Caco-2 (cell line): ENCODE measurements at regions of chr1 and their contacts with region 1.

Region 1: DNA sequence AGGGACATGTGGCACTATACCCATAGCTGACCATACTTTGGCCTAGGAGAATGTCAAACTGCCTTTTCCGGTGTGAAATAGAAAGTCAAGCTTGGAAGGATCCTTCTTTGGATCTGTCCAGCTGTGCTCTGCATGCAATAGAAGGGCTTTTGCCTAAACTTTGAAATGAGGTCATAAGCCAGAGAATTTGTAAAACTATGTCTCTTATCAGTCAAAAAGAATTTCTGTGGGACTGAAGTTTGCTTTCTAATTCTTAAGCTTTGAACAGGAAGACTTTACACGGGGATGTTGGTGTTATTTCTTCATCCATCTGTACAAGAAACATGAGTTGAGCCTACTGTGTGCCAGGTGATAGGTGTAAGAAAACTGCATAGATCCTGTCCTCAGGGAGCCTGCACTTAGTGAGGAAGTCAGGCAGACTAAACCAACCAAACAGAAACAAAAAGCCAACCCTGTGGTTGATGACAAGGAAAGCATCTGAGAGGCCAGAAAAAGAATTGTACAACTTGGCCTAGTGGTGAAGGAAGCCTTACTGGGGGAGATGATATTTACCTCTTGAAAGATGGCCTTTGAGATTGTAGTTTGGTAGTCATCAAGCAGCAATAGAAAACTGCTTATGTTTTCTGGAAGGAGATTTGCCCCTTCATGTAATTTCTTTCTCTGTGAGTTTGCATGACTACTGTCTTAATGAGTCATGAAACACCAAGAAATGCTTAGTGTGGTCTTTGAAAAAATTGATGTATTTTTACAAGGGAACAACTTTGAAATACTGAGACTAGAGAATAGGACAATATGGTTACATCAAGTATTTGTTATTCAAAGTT is 24.8 kb downstream of the TGFB2 start:
- DNase-seq: peak in 1 of 2 experiments; percentile 27
- H3K4me3 ChIP-seq: no peak overlapping the region
- H3K4me3 Mint-ChIP-seq: peak overlapping the region; percentile 37
- H3K27ac Mint-ChIP-seq: peak overlapping the region; percentile 88
- H3K4me1 ChIP-seq: peaks cover 85% of the 10 kb centered on the region
- H3K4me1 Mint-ChIP-seq: peaks cover 29% of the 10 kb centered on the region
- H3K27me3 ChIP-seq: no peaks in the 10 kb centered on the region
- H3K27me3 Mint-ChIP-seq: no peaks in the 10 kb centered on the region
- CTCF ChIP-seq: no peak

Region 2: DNA sequence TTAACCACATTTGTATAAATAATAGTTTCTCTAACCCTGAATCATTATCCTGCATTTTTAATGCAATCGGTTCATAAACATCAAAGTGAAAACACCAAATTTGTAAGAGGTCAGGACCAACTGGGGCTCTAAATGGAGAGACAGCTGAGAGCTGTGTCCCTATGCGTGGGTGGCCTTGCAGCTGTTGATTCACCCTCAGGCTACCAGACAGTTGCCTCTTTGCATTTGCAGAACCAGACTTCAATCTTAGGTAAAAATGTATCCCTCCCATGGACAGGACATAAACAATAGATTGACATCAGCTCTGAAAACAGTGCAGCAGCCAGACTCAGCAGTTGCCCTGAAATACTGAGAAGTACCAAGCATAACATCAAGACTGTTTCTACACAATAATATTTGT is 33.6 kb before region 1 on chr1:
- CTCF ChIA-PET with region 1: no interaction called
- POLR2A ChIA-PET with region 1: no interaction called
- intact Hi-C with region 1: no loop called
- DNase-seq: no peak
- H3K4me3 ChIP-seq: no peak overlapping the region
- H3K4me3 Mint-ChIP-seq: no peak overlapping the region
- H3K27ac Mint-ChIP-seq: no peak overlapping the region
- H3K4me1 ChIP-seq: peaks cover 6% of the 10 kb centered on the region
- H3K4me1 Mint-ChIP-seq: no peaks in the 10 kb centered on the region
- H3K27me3 ChIP-seq: no peaks in the 10 kb centered on the region
- H3K27me3 Mint-ChIP-seq: no peaks in the 10 kb centered on the region
- CTCF ChIP-seq: no peak

Region 3: GRCh38 chr1:218380151-218380977 is 10.5 kb after region 1 on chr1:
- CTCF ChIA-PET with region 1: interaction called, 5 read pairs
- POLR2A ChIA-PET with region 1: interaction called, 9 read pairs
- intact Hi-C with region 1: loop called (anchors 1 kb)
- DNase-seq: peak; percentile 79 to 82
- H3K4me3 ChIP-seq: no peak overlapping the region
- H3K4me3 Mint-ChIP-seq: peak overlapping the region; percentile 20
- H3K27ac Mint-ChIP-seq: peak overlapping the region; percentile 89
- H3K4me1 ChIP-seq: peaks cover 49% of the 10 kb centered on the region
- H3K4me1 Mint-ChIP-seq: peaks cover 30% of the 10 kb centered on the region
- H3K27me3 ChIP-seq: no peaks in the 10 kb centered on the region
- H3K27me3 Mint-ChIP-seq: no peaks in the 10 kb centered on the region
- CTCF ChIP-seq: no peak

Region 4: GRCh38 chr1:218401998-218402785 is 32.3 kb after region 1 on chr1:
- CTCF ChIA-PET with region 1: interaction called, 3 read pairs
- POLR2A ChIA-PET with region 1: no interaction called
- intact Hi-C with region 1: loop called (anchors 1 kb)
- DNase-seq: peak; percentile 42 to 46
- H3K4me3 ChIP-seq: no peak overlapping the region
- H3K4me3 Mint-ChIP-seq: no peak overlapping the region
- H3K27ac Mint-ChIP-seq: peak overlapping the region; percentile 16
- H3K4me1 ChIP-seq: peaks cover 19% of the 10 kb centered on the region
- H3K4me1 Mint-ChIP-seq: peaks cover 18% of the 10 kb centered on the region
- H3K27me3 ChIP-seq: no peaks in the 10 kb centered on the region
- H3K27me3 Mint-ChIP-seq: no peaks in the 10 kb centered on the region
- CTCF ChIP-seq: no peak

Region 5: GRCh38 chr1:218459878-218460711 is 90.2 kb after region 1 on chr1:
- CTCF ChIA-PET with region 1: no interaction called
- POLR2A ChIA-PET with region 1: no interaction called
- intact Hi-C with region 1: loop called (anchors 5 kb)
- DNase-seq: peak; percentile 35 to 45
- H3K4me3 ChIP-seq: no peak overlapping the region
- H3K4me3 Mint-ChIP-seq: peak overlapping the region; percentile 4
- H3K27ac Mint-ChIP-seq: peak overlapping the region; percentile 71
- H3K4me1 ChIP-seq: peaks cover 29% of the 10 kb centered on the region
- H3K4me1 Mint-ChIP-seq: peaks cover 35% of the 10 kb centered on the region
- H3K27me3 ChIP-seq: no peaks in the 10 kb centered on the region
- H3K27me3 Mint-ChIP-seq: no peaks in the 10 kb centered on the region
- CTCF ChIP-seq: no peak

Region 6: DNA sequence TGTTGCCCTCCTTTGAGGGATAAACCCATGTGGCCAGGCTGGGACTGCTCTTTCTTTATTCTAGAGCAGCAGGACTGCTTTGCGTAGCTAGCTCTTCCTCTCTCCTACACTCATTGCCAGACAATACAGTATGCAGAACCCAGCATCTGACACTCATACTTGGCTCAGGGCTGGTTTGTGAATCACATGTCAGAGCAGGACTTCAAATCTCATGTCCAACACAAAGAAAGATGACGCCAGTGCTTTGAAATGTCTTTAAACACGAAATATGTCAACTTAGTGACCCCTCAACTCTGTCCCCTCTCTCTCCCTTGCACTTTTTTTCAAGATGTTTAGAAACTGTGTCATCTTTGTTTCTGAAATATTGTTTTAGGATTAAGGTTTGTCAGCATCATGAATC is 110.2 kb after region 1 on chr1:
- CTCF ChIA-PET with region 1: no interaction called
- POLR2A ChIA-PET with region 1: no interaction called
- intact Hi-C with region 1: loop called (anchors 2 kb)
- DNase-seq: no peak
- H3K4me3 ChIP-seq: no peak overlapping the region
- H3K4me3 Mint-ChIP-seq: no peak overlapping the region
- H3K27ac Mint-ChIP-seq: peak overlapping the region; percentile 34
- H3K4me1 ChIP-seq: peaks cover 40% of the 10 kb centered on the region
- H3K4me1 Mint-ChIP-seq: peaks cover 22% of the 10 kb centered on the region
- H3K27me3 ChIP-seq: no peaks in the 10 kb centered on the region
- H3K27me3 Mint-ChIP-seq: no peaks in the 10 kb centered on the region
- CTCF ChIP-seq: no peak

Region 7: GRCh38 chr1:218488986-218489385 is 119.1 kb after region 1 on chr1:
- CTCF ChIA-PET with region 1: no interaction called
- POLR2A ChIA-PET with region 1: no interaction called
- intact Hi-C with region 1: loop called (anchors 1 kb)
- DNase-seq: peak; percentile 58 to 72
- H3K4me3 ChIP-seq: no peak overlapping the region
- H3K4me3 Mint-ChIP-seq: no peak overlapping the region
- H3K27ac Mint-ChIP-seq: peak overlapping the region; percentile 45
- H3K4me1 ChIP-seq: peaks cover 49% of the 10 kb centered on the region
- H3K4me1 Mint-ChIP-seq: peaks cover 44% of the 10 kb centered on the region
- H3K27me3 ChIP-seq: no peaks in the 10 kb centered on the region
- H3K27me3 Mint-ChIP-seq: no peaks in the 10 kb centered on the region
- CTCF ChIP-seq: no peak

Region 8: DNA sequence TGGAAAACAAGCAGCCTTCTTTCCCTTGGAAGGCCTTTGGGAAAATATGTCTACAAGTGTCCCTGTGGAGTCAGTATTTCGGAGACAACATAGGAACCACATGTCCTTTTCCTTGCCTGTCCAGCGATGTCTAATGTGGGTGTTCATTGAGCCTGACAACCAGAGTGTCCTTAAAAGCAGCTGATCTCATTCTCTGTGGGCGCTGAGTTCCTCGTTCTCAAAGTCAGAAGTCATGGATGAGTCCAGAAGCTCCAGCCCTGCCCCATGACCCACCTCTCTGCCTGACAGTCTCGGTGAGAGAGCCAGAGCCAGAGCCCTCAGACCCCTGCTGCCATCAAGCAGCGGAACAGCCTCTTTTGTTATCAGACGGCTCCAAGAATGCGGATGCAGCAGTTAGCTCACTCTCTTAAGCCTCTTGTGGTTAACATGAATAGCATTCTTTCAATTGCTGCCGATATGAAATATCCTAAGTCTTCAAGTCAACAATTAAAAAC is 304.4 kb after region 1 on chr1:
- CTCF ChIA-PET with region 1: no interaction called
- POLR2A ChIA-PET with region 1: no interaction called
- intact Hi-C with region 1: loop called (anchors 2 kb)
- DNase-seq: peak; percentile 72 to 82
- H3K4me3 ChIP-seq: no peak overlapping the region
- H3K4me3 Mint-ChIP-seq: peak overlapping the region; percentile 25
- H3K27ac Mint-ChIP-seq: peak overlapping the region; percentile 79
- H3K4me1 ChIP-seq: peaks cover 12% of the 10 kb centered on the region
- H3K4me1 Mint-ChIP-seq: peaks cover 8% of the 10 kb centered on the region
- H3K27me3 ChIP-seq: no peaks in the 10 kb centered on the region
- H3K27me3 Mint-ChIP-seq: no peaks in the 10 kb centered on the region
- CTCF ChIP-seq: peak in 1 of 2 experiments; percentile 29